IMR-90 (cell line): ENCODE measurements at regions of chr6 and their contacts with region 1.

Region 1: DNA sequence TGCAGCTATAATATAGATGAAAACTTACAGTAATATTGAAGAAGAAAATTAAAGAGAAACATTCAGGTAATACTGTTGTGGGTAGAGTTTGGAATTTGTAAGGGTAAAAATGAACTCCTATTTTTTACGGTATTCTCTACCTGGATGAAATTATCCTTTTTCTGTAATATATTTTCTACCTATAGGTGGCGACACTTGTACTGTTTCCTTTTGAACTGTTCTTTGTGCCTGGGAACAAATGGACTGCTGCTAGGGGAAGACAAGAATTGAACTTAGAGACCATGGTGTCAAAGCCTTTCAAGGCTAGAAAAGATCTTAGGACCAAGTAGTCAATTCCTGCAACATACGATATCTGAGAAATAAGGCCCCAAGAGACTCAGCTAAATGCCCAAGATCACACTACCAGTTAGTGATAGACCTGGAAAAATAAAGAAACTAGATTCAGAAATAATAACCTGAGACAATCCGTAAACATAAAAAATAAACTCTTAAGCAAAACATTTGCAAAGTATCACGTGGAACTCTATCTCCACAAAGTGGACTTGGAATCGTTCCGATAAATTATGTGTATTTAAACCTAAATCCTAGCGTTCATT is 383.8 kb downstream of the TFAP2A start:
- DNase-seq: no peak
- ATAC-seq: no peak
- H3K4me3 ChIP-seq: no peak overlapping the region
- H3K27ac ChIP-seq: no peak overlapping the region
- H3K4me1 ChIP-seq: no peaks in the 10 kb centered on the region
- H3K27me3 ChIP-seq: no peaks in the 10 kb centered on the region
- CTCF ChIP-seq: no peak
- POLR2A ChIP-seq: no peak
- RAD21 ChIP-seq: no peak

Region 2: GRCh38 chr6:10429638-10430427 is 398.8 kb after region 1 on chr6:
- CTCF ChIA-PET with region 1: no interaction called
- POLR2A ChIA-PET with region 1: no interaction called
- dilution Hi-C with region 1: no loop called
- in situ Hi-C with region 1: no loop called
- intact Hi-C with region 1: loop called (anchors 5 kb)
- DNase-seq: peak; percentile 52
- ATAC-seq: peak; percentile 54; the same call in 1 of the 2 replicates
- H3K4me3 ChIP-seq: no peak overlapping the region
- H3K27ac ChIP-seq: no peak overlapping the region
- H3K4me1 ChIP-seq: no peaks in the 10 kb centered on the region
- H3K27me3 ChIP-seq: peaks cover 12% of the 10 kb centered on the region
- CTCF ChIP-seq: peak; percentile 58
- POLR2A ChIP-seq: no peak
- RAD21 ChIP-seq: peak; percentile 80